ENCODE measurements at regions of chr2 and their contacts with region 1.

Region 1: DNA sequence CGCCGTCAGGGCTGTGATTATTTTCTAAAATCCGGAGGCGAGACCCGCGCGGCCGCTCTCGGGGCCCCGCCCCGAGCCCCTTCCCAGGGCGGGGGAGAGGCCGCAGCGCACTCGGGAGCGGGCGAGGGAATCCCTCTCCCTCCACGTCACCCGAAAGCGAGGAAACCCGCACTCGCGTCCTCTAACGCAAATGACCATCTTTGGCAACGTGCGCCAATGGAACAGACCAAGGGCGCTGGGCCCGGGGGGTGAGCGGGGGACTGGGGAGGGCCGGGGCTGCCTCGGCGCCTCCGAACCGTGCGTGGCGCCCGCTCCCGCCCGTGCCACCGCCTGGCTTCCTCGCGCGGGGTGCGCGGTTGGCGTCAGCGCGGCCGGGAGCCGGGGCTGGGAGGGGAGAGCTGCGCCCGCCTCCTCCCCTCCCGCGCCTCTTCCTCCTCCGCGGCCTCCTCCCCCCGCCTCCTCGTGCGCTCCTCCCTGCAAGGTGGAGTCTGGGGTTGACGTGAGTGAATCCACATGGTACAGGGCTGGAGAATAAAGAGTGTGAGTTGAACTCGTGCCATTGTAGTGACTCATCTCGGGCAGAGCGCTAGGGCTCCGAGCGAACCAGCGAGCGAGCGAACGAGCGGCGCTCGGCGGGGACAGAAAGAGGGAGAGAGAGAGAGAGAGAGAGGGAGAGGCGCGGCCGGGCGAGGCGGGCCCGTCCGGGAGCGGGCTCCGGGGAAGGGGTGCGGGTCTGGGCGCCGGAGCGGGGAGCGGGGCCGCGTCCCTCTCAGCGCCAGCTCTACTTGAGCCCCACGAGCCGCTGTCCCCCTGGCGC is at the start of gene FOSL2:
- DNase-seq: peak; percentile 95
- H3K4me3 Mint-ChIP-seq: peak within 1 kb of the TSS; percentile 91
- H3K27ac Mint-ChIP-seq: peak within 1 kb of the TSS; percentile 99
- H3K4me1 Mint-ChIP-seq: peaks cover 27% of the 10 kb centered on the region
- H3K27me3 Mint-ChIP-seq: no peaks in the 10 kb centered on the region
- total RNA-seq, gene FOSL2: 96.4 to 100 TPM

Region 2: DNA sequence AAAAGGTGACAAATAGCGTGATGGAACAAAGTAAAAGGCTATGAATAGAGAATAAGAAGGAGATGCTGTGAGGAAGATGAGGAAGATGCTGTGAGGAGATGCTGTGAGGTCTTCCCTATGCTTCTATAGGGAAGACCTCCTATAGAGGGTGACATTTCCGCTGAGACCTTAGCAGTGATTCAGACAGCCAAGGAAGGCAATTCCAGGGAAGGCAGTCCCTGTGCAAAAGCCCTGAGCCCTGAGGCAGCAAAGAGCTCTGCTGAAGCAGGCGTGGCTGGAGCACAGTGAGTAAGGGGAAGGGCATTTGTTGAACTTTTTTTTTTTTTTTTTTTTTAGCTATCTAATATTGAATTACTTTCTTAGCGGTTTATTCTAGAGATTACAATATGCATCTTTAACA is 142.5 kb before region 1 on chr2:
- CTCF ChIA-PET with region 1: interaction called, 6 read pairs
- POLR2A ChIA-PET with region 1: interaction called, 33 read pairs
- DNase-seq: no peak
- H3K4me3 Mint-ChIP-seq: no peak overlapping the region
- H3K27ac Mint-ChIP-seq: peak overlapping the region; percentile 7
- H3K4me1 Mint-ChIP-seq: peaks cover 51% of the 10 kb centered on the region
- H3K27me3 Mint-ChIP-seq: no peaks in the 10 kb centered on the region

Region 3: GRCh38 chr2:28346587-28346986 is 45.9 kb before region 1 on chr2:
- CTCF ChIA-PET with region 1: interaction called, 3 read pairs
- POLR2A ChIA-PET with region 1: interaction called, 76 read pairs
- DNase-seq: no peak
- H3K4me3 Mint-ChIP-seq: no peak overlapping the region
- H3K27ac Mint-ChIP-seq: peak overlapping the region; percentile 21
- H3K4me1 Mint-ChIP-seq: peaks cover 45% of the 10 kb centered on the region
- H3K27me3 Mint-ChIP-seq: no peaks in the 10 kb centered on the region

Region 4: GRCh38 chr2:28366496-28367282 is 25.8 kb before region 1 on chr2:
- CTCF ChIA-PET with region 1: interaction called, 8 read pairs
- POLR2A ChIA-PET with region 1: interaction called, 114 read pairs
- DNase-seq: peak; percentile 83
- H3K4me3 Mint-ChIP-seq: peak overlapping the region; percentile 52
- H3K27ac Mint-ChIP-seq: peak overlapping the region; percentile 86
- H3K4me1 Mint-ChIP-seq: peaks cover 69% of the 10 kb centered on the region
- H3K27me3 Mint-ChIP-seq: peaks cover 4% of the 10 kb centered on the region

Region 5: GRCh38 chr2:28406276-28407096 is 14.0 kb after region 1 on chr2:
- CTCF ChIA-PET with region 1: interaction called, 4 read pairs
- POLR2A ChIA-PET with region 1: interaction called, 85 read pairs
- DNase-seq: peak; percentile 88
- H3K4me3 Mint-ChIP-seq: peak overlapping the region; percentile 19
- H3K27ac Mint-ChIP-seq: peak overlapping the region; percentile 97
- H3K4me1 Mint-ChIP-seq: peaks cover 96% of the 10 kb centered on the region
- H3K27me3 Mint-ChIP-seq: no peaks in the 10 kb centered on the region